Activated naive CD4-positive, alpha-beta T cell treated with anti-CD3 and anti-CD28 coated beads, Interleukin-2, amount 10 ng/mL, durations not matched to agents 7 days and 5 days (primary cell): ENCODE measurements at regions of chr3 and their contacts with region 1.

Region 1: GRCh38 chr3:97793420-97794019 is 28.3 kb upstream of the CRYBG3 start:
- DNase-seq: no peak
- H3K4me3 Mint-ChIP-seq: no peak overlapping the region
- H3K27ac Mint-ChIP-seq: no peak overlapping the region
- H3K4me1 Mint-ChIP-seq: no peaks in the 10 kb centered on the region
- H3K27me3 Mint-ChIP-seq: no peaks in the 10 kb centered on the region

Region 2: DNA sequence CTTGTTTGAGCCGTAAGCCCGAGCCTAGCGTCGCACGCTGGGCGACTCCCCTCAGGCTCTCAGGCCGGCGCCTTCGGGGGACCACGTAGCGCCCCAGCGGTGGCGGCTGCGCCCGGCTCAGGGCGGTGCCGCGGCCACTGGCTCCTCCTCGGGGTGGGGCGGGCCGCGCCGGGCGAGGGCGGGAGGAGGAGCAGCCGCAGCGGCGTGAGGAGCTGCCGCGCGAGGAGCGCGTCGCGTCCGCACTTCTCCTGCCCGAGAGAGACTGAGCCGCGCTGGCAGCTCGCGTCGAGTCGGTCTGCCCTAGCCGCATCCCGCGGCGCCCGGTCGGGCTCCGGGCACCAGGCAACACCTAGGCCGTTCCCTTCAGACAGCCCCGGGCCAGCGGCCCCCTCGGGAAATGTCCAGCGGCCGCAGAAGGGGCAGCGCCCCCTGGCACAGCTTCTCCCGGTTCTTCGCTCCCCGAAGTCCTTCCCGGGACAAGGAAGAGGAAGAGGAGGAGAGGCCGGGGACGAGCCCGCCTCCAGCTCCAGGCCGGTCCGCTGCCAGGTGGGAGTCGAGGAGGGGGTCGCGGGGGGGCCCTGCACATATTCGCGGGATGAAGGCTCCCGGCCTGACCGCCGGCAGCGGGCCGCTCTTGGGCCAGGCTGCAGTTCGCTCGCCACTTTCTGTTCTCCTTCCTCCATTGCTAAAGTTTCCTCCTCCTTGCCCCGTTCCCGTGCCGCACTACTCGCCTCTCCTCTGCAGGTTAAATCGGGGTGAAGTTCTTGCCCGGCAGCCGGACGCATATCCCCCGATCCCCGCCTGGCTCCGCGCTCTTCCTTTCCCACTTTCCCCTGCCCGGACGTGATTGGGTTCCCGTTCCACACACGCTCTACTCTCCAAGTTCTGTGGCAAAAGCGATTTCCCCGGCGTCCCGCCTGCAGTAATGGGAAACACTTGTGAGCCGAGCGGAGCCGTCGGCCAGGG is 28.6 kb after region 1 on chr3 and contains the start of gene CRYBG3:
- CTCF ChIA-PET with region 1: interaction called, 10 read pairs
- DNase-seq: peak; percentile 88
- H3K4me3 Mint-ChIP-seq: peak within 1 kb of the TSS; percentile 99
- H3K27ac Mint-ChIP-seq: peak within 1 kb of the TSS; percentile 85
- H3K4me1 Mint-ChIP-seq: peaks cover 27% of the 10 kb centered on the region
- H3K27me3 Mint-ChIP-seq: peaks cover 40% of the 10 kb centered on the region

Region 3: DNA sequence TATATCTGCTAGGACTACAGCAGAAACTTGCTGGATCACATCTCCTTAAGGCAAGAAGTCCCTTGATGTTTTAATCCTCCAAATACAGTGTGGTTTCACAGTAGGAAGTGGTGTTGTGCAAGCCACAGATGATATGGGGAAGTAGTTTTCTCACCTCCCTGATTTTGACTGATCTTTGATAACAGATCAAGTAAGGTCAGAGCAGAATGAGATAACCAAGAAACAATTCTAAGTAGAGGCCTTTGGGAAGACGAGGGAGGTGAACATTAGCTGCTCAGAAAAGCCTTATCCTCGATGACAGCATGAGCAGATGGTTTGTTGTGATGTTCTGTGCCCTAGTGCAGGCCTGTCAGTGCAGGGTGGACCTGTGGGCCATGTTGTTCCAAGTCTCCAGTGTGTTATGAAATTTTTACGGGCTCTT is 117.4 kb after region 1 on chr3:
- CTCF ChIA-PET with region 1: no interaction called
- DNase-seq: peak; percentile 48
- H3K4me3 Mint-ChIP-seq: peak overlapping the region; percentile 73
- H3K27ac Mint-ChIP-seq: peak overlapping the region; percentile 98
- H3K4me1 Mint-ChIP-seq: peaks cover 26% of the 10 kb centered on the region
- H3K27me3 Mint-ChIP-seq: no peaks in the 10 kb centered on the region